Activated CD4-positive, alpha-beta T cell treated with anti-CD3 and anti-CD28 coated beads, Interleukin-2, amount 10 ng/mL, durations not matched to agents 7 days and 5 days (primary cell): ENCODE measurements at regions of chr10 and their contacts with region 1.

Region 1: GRCh38 chr10:110671788-110672579 is 27.8 kb downstream of the RBM20 start:
- DNase-seq: peak; percentile 67
- H3K4me3 Mint-ChIP-seq: peak overlapping the region; percentile 80
- H3K27ac Mint-ChIP-seq: peak overlapping the region; percentile 43
- H3K4me1 Mint-ChIP-seq: peaks cover 5% of the 10 kb centered on the region
- H3K27me3 Mint-ChIP-seq: peaks cover 27% of the 10 kb centered on the region

Region 2: DNA sequence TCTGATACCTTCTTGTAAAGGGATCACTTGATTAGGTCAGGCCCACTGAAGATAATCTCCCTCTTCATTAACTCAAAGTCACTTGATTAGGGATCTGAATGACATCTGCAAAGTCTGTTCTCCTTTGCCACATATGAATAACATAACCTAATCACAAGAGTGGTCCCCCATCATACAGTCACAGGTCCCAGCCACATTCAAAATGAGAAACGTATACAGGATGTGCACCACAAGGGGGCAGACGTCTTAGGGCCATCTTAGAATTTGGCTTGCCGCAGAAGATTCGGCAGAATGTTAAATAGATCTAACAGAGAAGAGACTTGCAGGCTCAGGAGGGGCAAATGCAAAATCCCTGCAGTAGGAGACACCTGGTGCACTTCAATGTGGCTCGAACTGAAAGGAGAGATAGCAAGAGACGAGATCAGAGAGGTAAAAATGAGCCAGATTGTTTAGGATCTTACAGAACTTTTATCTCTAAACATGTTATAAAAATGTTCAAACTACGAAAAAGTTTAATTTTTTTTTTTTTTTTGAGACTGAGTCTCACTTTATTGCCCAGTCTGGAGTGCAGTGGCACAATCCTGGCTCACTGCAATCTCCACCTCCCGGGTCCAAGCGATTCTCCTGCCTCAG is 114.9 kb before region 1 on chr10:
- CTCF ChIA-PET with region 1: no interaction called
- POLR2A ChIA-PET with region 1: no interaction called
- DNase-seq: peak; percentile 80
- H3K4me3 Mint-ChIP-seq: no peak overlapping the region
- H3K27ac Mint-ChIP-seq: no peak overlapping the region
- H3K4me1 Mint-ChIP-seq: peaks cover 7% of the 10 kb centered on the region
- H3K27me3 Mint-ChIP-seq: peaks cover 38% of the 10 kb centered on the region

Region 3: GRCh38 chr10:110613996-110614495 is 57.9 kb before region 1 on chr10:
- CTCF ChIA-PET with region 1: interaction called, 12 read pairs
- POLR2A ChIA-PET with region 1: no interaction called
- DNase-seq: no peak
- H3K4me3 Mint-ChIP-seq: no peak overlapping the region
- H3K27ac Mint-ChIP-seq: no peak overlapping the region
- H3K4me1 Mint-ChIP-seq: peaks cover 43% of the 10 kb centered on the region
- H3K27me3 Mint-ChIP-seq: no peaks in the 10 kb centered on the region

Region 4: GRCh38 chr10:110657968-110658691 is 13.9 kb before region 1 on chr10:
- CTCF ChIA-PET with region 1: interaction called, 22 read pairs
- POLR2A ChIA-PET with region 1: no interaction called
- DNase-seq: no peak
- H3K4me3 Mint-ChIP-seq: no peak overlapping the region
- H3K27ac Mint-ChIP-seq: no peak overlapping the region
- H3K4me1 Mint-ChIP-seq: peaks cover 12% of the 10 kb centered on the region
- H3K27me3 Mint-ChIP-seq: peaks cover 14% of the 10 kb centered on the region

Region 5: DNA sequence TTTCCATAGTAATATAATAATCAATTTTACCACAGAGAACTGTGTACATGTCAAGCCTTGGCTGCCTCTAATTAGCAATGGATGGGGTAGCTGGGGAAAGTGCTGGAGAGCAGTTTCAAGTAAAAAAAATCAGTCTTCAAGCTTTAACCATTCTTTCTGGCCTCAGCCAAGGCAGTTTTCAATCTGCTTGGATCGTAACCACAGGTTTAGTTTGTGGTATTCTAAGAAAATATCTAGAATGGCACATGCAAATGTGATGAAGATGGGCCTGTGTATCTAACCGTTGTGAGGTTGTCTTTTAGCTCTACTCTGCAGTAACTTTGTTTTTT is 94.0 kb after region 1 on chr10:
- CTCF ChIA-PET with region 1: no interaction called
- POLR2A ChIA-PET with region 1: no interaction called
- DNase-seq: no peak
- H3K4me3 Mint-ChIP-seq: no peak overlapping the region
- H3K27ac Mint-ChIP-seq: no peak overlapping the region
- H3K4me1 Mint-ChIP-seq: peaks cover 5% of the 10 kb centered on the region
- H3K27me3 Mint-ChIP-seq: no peaks in the 10 kb centered on the region